MCF 10A (cell line): ENCODE measurements at regions of chr5 and their contacts with region 1.

Region 1: DNA sequence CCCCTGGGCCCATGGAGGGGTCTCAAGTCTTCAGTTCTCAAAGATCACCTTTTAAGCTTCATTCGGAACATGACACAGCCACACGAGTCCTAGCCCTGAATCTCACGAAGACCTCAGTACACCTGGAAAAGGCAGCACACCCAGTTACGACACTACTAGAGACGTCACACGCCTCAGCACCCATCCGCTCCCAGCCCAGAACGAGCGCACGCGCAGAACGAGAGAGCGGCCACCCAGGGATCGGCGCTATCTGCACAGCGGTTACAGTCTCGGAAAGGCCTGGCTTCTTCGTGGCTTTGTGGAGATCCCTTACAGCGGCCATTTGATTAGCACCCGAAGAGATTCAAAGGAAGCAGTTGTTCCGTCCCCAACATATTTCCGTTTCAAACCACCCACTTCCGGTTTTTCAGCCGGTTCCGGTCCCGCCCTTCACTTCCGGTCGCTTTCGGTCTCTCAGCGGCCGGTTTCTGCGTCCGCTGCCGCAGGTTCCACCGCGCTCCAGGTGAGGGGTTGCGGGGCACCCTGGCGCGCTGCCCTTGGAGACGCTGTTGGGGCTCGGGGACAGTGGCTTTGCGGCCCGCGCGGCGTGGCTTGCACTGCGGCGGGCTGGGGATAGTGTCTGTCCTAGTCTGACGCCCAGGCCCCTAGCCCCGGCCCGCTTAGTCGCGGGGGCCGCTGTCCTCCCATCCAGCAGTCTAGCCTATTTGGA is at the start of gene UBLCP1:
- DNase-seq: peak; percentile 92
- H3K4me3 Mint-ChIP-seq: peak within 1 kb of the TSS; percentile 83
- H3K27ac Mint-ChIP-seq: peak within 1 kb of the TSS; percentile 97
- H3K4me1 Mint-ChIP-seq: peaks cover 24% of the 10 kb centered on the region
- H3K27me3 Mint-ChIP-seq: no peaks in the 10 kb centered on the region
- CTCF ChIP-seq: no peak
- total RNA-seq, gene UBLCP1: 74.4 and 89.6 TPM in 2 replicates

Region 2: DNA sequence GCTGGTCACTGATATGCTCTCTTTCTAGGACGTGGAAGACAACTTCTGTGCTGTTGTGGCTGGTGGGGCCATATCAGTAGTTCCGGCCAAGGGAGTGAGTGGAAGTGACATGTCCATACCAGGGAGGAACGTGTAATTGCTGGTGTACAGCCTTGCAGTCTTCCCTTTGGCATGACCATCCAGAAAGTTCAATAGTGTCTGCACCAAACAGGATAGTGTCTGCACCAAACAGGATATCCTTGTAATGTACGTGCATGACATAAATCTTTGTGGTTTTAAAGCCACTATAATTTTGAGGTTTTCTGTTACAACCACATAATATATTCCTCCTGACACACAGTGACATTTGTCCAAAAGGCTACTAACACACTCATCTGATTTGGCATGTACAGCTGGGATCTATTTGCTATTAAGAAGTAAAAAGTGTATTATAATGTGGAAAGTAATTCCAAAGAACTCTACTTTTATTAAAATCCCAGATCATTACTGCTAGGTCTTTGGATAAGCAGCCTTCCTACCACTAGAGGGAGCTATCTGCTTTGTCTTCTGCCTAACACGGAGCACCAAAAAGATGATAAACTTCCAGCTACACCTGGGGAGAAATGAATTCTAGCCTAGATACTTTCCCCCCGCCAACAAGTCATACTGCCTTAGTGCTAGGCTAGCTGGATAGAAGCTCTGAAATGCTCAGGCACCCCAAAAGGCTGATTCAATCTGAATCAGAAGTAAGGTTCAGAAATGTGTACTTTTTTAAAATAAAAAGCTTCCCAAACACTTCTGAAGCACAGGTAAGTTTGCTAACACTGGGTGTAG is 106.4 kb before region 1 on chr5:
- CTCF ChIA-PET with region 1: interaction called, 12 read pairs
- POLR2A ChIA-PET with region 1: interaction called, 12 read pairs
- intact Hi-C with region 1: loop called (anchors 2 kb)
- DNase-seq: peak; percentile 87
- H3K4me3 Mint-ChIP-seq: no peak overlapping the region
- H3K27ac Mint-ChIP-seq: peak overlapping the region; percentile 28
- H3K4me1 Mint-ChIP-seq: peaks cover 12% of the 10 kb centered on the region
- H3K27me3 Mint-ChIP-seq: no peaks in the 10 kb centered on the region
- CTCF ChIP-seq: peak; percentile 88

Region 3: GRCh38 chr5:159178978-159179377 is 84.0 kb before region 1 on chr5:
- CTCF ChIA-PET with region 1: no interaction called
- POLR2A ChIA-PET with region 1: interaction called, 10 read pairs
- intact Hi-C with region 1: no loop called
- DNase-seq: peak; percentile 95
- H3K4me3 Mint-ChIP-seq: peak overlapping the region; percentile 54
- H3K27ac Mint-ChIP-seq: peak overlapping the region; percentile 96
- H3K4me1 Mint-ChIP-seq: peaks cover 77% of the 10 kb centered on the region
- H3K27me3 Mint-ChIP-seq: no peaks in the 10 kb centered on the region
- CTCF ChIP-seq: no peak

Region 4: GRCh38 chr5:159203351-159203750 is 59.7 kb before region 1 on chr5:
- CTCF ChIA-PET with region 1: interaction called, 8 read pairs
- POLR2A ChIA-PET with region 1: interaction called, 81 read pairs
- intact Hi-C with region 1: no loop called
- DNase-seq: no peak
- H3K4me3 Mint-ChIP-seq: peak overlapping the region; percentile 97
- H3K27ac Mint-ChIP-seq: peak overlapping the region; percentile 99
- H3K4me1 Mint-ChIP-seq: peaks cover 51% of the 10 kb centered on the region
- H3K27me3 Mint-ChIP-seq: no peaks in the 10 kb centered on the region
- CTCF ChIP-seq: no peak

Region 5: DNA sequence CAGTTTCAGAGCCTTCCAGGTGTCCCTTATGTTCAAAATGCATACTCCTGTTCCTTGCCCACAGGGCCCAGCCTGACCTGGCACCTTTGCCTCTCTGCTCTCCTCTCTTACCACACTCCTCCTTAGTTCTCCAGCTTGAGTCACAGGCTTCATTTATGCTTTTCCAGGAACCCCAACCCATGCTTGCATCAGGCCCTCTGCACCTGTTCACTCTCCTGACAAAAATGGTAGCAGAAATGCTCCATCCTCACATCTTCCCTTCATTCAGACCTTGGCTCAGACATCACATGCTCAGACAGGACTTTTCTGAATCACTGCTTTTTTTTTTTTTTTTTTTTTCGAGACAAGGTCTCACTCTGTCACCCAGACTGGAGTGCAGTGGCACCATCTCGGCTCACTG is 38.5 kb before region 1 on chr5:
- CTCF ChIA-PET with region 1: interaction called, 4 read pairs
- POLR2A ChIA-PET with region 1: interaction called, 35 read pairs
- intact Hi-C with region 1: loop called (anchors 5 kb)
- DNase-seq: peak; percentile 64
- H3K4me3 Mint-ChIP-seq: no peak overlapping the region
- H3K27ac Mint-ChIP-seq: peak overlapping the region; percentile 66
- H3K4me1 Mint-ChIP-seq: peaks cover 51% of the 10 kb centered on the region
- H3K27me3 Mint-ChIP-seq: no peaks in the 10 kb centered on the region
- CTCF ChIP-seq: no peak

Region 6: DNA sequence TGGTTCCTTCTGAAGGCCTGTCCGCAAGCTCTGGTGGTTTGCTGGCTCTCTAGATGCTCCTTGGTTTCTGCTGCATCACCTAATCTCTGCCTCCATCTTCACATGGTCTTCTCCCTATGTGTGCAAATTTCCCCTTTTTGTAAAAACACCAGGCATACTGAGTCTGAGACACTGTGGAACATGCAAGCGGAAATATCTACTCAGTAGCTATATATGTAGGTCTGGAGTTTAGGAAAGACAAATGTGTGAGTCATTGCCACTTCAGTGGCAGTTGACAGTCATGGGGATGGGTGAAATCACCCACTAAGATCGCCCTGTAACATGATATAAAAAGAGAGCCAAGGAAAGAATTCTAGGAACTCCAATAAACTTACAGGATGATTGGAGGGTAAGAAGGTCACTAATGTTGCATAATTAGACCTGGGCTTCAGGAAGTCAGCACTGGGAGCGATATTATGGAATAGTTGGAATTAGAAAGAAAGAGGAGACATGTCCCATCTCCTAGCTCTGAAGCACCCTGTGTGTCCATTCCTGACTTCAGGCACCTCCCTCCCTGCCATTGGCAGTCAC is 22.6 kb before region 1 on chr5:
- CTCF ChIA-PET with region 1: interaction called, 6 read pairs
- POLR2A ChIA-PET with region 1: interaction called, 26 read pairs
- intact Hi-C with region 1: no loop called
- DNase-seq: peak; percentile 86
- H3K4me3 Mint-ChIP-seq: no peak overlapping the region
- H3K27ac Mint-ChIP-seq: peak overlapping the region; percentile 36
- H3K4me1 Mint-ChIP-seq: peaks cover 32% of the 10 kb centered on the region
- H3K27me3 Mint-ChIP-seq: no peaks in the 10 kb centered on the region
- CTCF ChIP-seq: no peak